ENCODE measurements at regions of chr9 and their contacts with region 1.

Region 1: GRCh38 chr9:107340920-107341632 is 58.0 kb downstream of the RAD23B start:
- DNase-seq: peak; percentile 70
- H3K4me3 ChIP-seq: no peak overlapping the region; a peak in 1 of 4 replicates
- H3K27ac ChIP-seq: no peak overlapping the region
- H3K4me1 ChIP-seq: peaks cover 4 to 7% of the 10 kb centered on the region in 2 experiments; a peak in 2 of 4 replicates
- H3K27me3 ChIP-seq: no peaks in the 10 kb centered on the region
- CTCF ChIP-seq: peak; percentile 84
- EP300 ChIP-seq: no peak
- RAD21 ChIP-seq: peak; percentile 70

Region 2: DNA sequence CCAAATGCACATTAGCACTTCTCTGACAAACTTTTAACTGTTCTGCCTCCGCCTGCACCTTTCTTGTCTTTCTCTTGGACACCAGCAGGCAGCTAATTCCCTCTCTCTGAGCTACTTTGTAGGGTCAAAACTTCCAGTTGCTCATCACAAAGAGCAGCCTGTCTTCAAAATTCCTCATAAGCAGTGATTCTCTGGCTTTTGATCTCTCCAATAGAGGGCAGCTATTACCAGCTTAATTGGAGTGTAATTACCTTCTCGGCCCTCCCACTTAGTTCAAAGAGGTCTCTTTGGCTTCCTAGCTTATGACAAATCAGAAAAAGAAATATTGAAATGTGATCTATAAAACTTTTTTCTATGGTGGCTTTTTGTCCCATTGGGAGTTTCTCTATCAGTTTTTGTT is 101.6 kb before region 1 on chr9:
- CTCF ChIA-PET with region 1: interaction called, 14 read pairs
- POLR2A ChIA-PET with region 1: no interaction called
- DNase-seq: no peak
- H3K4me3 ChIP-seq: no peak overlapping the region
- H3K27ac ChIP-seq: no peak overlapping the region
- H3K4me1 ChIP-seq: peaks cover 0 to 18% of the 10 kb centered on the region in 2 experiments; a peak in 1 of 4 replicates
- H3K27me3 ChIP-seq: no peaks in the 10 kb centered on the region
- CTCF ChIP-seq: peak; percentile 39; the same call in 1 of the 2 replicates
- EP300 ChIP-seq: no peak
- RAD21 ChIP-seq: peak; percentile 46

Region 3: DNA sequence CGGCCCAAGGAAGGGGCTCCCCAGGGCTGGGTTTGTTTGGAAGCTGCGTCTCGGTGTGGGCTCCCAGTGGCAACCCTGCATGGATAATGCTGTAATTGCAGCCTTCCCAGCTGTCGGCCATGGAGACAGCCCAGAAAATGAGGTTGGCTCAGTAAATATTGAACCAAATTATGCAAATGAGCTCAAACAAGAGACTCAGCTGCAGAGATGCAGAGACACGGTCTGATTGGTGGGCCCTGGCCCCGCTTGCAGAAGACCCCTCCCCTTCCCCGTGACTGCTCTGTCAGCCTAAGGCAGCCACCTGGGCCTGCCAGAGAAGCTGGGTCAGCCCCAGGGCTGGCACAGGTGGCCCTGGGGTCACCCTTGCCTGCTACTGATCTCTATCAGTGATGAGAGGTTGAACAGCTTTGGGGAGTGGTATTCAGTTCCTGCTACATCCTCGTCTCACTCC is 17.9 kb after region 1 on chr9:
- CTCF ChIA-PET with region 1: interaction called, 11 read pairs
- POLR2A ChIA-PET with region 1: interaction called, 3 read pairs
- DNase-seq: no peak
- H3K4me3 ChIP-seq: no peak overlapping the region
- H3K27ac ChIP-seq: no peak overlapping the region
- H3K4me1 ChIP-seq: peaks cover 0 to 8% of the 10 kb centered on the region in 2 experiments; a peak in 1 of 4 replicates
- H3K27me3 ChIP-seq: no peaks in the 10 kb centered on the region
- CTCF ChIP-seq: no peak
- EP300 ChIP-seq: no peak
- RAD21 ChIP-seq: no peak

Region 4: GRCh38 chr9:107862323-107862722 is 521.2 kb after region 1 on chr9:
- CTCF ChIA-PET with region 1: no interaction called
- POLR2A ChIA-PET with region 1: no interaction called
- DNase-seq: no peak
- H3K4me3 ChIP-seq: no peak overlapping the region
- H3K27ac ChIP-seq: no peak overlapping the region
- H3K4me1 ChIP-seq: no peaks in the 10 kb centered on the region
- H3K27me3 ChIP-seq: peaks cover 3% of the 10 kb centered on the region; the same call in 1 of the 2 replicates
- CTCF ChIP-seq: no peak
- EP300 ChIP-seq: no peak
- RAD21 ChIP-seq: no peak

Measured in SK-N-SH (cell line).